PC-9 (cell line): ENCODE measurements at regions of chr11 and their contacts with region 1.

Region 1: DNA sequence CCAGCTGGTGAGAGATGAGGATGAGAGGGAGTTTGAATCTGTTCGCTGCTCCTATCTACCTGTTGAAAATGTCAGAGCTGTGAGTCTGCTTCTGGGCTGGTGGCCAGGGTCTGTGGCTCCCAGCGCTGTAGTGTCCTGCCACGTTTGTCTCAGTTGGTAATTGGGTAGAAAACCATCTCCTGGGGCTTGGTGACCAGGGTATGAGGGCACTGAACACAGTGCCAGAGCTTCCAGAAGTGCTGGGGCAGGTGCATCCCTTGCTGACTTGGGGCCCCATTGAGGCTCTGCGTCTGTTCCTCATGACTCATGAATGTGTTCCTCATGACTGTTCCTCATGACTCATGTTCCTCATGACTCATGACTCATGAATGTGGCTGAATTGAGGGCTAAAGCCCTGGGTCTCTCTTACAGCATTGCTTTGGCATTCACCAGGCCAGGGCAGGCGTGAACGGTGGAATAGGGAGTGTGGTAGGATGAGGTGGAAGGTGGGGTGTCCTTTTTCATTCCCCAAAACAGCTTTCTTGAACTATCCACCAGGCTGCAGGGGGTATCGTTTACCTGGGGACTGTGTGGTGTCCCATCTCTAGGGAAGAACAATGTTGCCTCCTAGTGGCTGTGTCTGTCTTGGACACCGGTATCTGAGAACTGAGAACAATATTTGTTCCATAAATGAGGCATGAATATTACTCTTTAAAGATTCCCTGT is 139.5 kb downstream of the COMMD9 start:
- DNase-seq: peak; percentile 94 to 100
- H3K4me3 ChIP-seq: no peak overlapping the region; the same call in 1 of the 2 replicates
- H3K27ac ChIP-seq: peak overlapping the region; percentile 89
- H3K4me1 ChIP-seq: peaks cover 30% of the 10 kb centered on the region
- H3K27me3 ChIP-seq: no peaks in the 10 kb centered on the region
- CTCF ChIP-seq: peak; percentile 88

Region 2: DNA sequence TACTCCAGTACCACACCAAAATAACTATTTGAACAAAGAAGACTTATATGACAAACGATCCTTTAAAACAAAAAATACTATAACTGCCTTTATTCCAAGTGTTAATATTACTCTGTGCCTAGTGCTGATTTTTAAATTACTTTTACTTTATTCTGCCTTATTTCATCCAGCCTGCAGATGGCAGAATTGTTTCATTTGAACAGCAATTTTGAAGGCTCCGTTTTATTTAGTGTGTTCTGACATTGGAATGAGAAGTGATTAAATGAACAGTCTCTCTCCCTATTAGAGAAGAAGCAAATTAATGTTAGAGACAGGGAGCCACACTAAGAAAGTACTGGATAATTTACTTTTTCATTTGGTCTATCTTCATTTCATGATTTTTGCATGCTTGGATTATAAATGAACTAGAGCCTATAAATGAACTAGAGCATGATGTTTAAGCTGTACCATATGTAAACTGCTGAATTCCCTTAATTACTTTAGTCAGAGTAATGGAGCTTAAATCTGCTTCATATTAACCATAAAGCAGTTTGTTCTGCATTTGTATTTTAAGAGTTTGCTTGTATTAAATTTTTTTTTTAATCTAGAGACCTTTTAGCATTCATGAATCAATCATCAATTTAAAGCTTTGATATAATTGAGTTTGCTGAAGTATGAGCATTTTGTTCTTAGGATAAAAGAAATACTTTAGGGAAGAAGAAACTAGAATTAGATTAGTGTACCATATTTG is 1223.4 kb before region 1 on chr11:
- CTCF ChIA-PET with region 1: no interaction called
- POLR2A ChIA-PET with region 1: no interaction called
- intact Hi-C with region 1: loop called (anchors 1 kb)
- DNase-seq: peak; percentile 8 to 50
- H3K4me3 ChIP-seq: no peak overlapping the region
- H3K27ac ChIP-seq: no peak overlapping the region
- H3K4me1 ChIP-seq: peaks cover 13% of the 10 kb centered on the region
- H3K27me3 ChIP-seq: no peaks in the 10 kb centered on the region
- CTCF ChIP-seq: peak; percentile 94

Region 3: DNA sequence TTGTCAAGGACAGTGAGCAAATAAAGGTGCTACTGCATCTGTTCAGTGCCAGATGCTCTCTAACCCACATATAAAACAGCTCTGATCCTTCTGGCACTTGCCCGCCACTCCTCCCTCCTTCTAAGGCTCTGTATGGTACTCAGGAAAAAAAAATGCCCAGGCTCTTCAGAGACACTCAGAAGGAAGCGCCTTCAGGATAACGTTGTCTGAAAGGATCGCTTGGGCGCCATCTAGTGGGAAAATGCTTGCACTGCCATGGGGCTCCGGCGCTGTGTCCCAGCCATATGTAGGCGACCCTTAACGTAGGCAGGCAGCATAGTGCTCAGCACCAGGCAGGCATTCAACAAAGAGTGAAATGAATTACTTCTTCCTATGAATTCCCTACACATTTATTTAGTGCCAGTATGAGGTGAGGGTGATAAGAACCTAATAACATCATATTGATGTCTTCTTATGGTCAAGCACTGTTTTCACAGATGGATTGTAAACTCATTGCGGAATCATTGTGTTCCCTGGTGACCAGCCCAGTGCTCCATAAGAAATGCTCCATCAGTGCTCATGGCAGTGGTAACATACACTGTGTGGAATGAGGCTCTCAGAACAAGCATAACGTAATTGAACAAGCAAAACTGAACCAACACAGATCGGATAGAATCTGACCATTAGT is 663.9 kb before region 1 on chr11:
- CTCF ChIA-PET with region 1: no interaction called
- POLR2A ChIA-PET with region 1: no interaction called
- intact Hi-C with region 1: loop called (anchors 1 kb)
- DNase-seq: peak; percentile 68 to 83
- H3K4me3 ChIP-seq: no peak overlapping the region
- H3K27ac ChIP-seq: no peak overlapping the region
- H3K4me1 ChIP-seq: no peaks in the 10 kb centered on the region
- H3K27me3 ChIP-seq: no peaks in the 10 kb centered on the region
- CTCF ChIP-seq: peak; percentile 96

Region 4: DNA sequence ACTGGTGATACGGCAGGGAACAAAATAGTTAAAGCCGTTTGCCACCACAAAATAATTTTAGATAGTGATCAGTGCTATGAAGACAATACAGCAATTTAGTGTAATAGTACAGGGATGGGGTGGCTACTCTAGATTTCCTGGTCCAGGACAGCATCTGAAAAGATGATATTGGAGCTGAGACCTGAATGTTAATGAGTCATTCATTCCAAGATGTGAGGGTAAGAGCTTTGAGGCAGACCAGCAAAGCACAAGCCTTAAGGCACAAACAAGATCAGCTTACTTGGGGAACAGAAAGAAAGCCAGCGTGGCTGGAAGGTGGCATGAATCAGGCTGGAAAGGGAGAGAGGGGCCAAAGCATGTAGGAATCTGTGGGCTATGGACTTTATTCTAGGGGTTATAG is 354.8 kb before region 1 on chr11:
- CTCF ChIA-PET with region 1: no interaction called
- POLR2A ChIA-PET with region 1: no interaction called
- intact Hi-C with region 1: loop called (anchors 10 kb)
- DNase-seq: peak; percentile 46 to 83
- H3K4me3 ChIP-seq: no peak overlapping the region
- H3K27ac ChIP-seq: peak overlapping the region; percentile 30
- H3K4me1 ChIP-seq: peaks cover 56% of the 10 kb centered on the region
- H3K27me3 ChIP-seq: no peaks in the 10 kb centered on the region
- CTCF ChIP-seq: no peak

Region 5: DNA sequence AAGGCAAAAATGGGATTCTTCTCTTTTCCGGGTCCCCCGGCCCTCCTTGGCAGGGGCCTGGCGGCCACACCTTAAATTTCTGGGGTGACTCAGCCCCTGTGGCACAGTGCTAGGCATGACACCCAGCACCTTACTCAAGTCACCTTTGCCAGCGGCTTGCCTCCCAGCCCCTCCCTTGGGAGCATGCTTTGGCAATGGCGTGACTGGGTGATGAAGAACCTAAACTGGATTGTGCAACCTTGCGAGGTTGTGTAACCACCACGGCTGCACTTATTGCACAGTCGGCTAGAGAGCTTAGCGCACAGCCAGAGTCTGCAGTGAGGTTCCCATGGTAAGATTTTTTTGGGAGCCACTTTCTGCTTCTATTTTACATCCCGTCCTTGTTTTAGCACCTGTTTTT is 222.0 kb before region 1 on chr11:
- CTCF ChIA-PET with region 1: no interaction called
- POLR2A ChIA-PET with region 1: no interaction called
- intact Hi-C with region 1: loop called (anchors 5 kb)
- DNase-seq: peak; percentile 95 to 99
- H3K4me3 ChIP-seq: peak overlapping the region; percentile 47; the same call in 1 of the 2 replicates
- H3K27ac ChIP-seq: peak overlapping the region; percentile 91
- H3K4me1 ChIP-seq: peaks cover 37% of the 10 kb centered on the region
- H3K27me3 ChIP-seq: no peaks in the 10 kb centered on the region
- CTCF ChIP-seq: no peak

Region 6: GRCh38 chr11:36265793-36266628 is 116.3 kb after region 1 on chr11:
- CTCF ChIA-PET with region 1: no interaction called
- POLR2A ChIA-PET with region 1: no interaction called
- intact Hi-C with region 1: loop called (anchors 1 kb)
- DNase-seq: peak; percentile 46 to 63
- H3K4me3 ChIP-seq: no peak overlapping the region
- H3K27ac ChIP-seq: no peak overlapping the region
- H3K4me1 ChIP-seq: no peaks in the 10 kb centered on the region
- H3K27me3 ChIP-seq: no peaks in the 10 kb centered on the region
- CTCF ChIP-seq: peak; percentile 97

Region 7: GRCh38 chr11:36478700-36479329 is 329.1 kb after region 1 on chr11:
- CTCF ChIA-PET with region 1: no interaction called
- POLR2A ChIA-PET with region 1: no interaction called
- intact Hi-C with region 1: loop called (anchors 5 kb)
- DNase-seq: peak; percentile 47 to 51
- H3K4me3 ChIP-seq: no peak overlapping the region
- H3K27ac ChIP-seq: no peak overlapping the region
- H3K4me1 ChIP-seq: 0 out of 2 replicates have a peak, but pooled peaks cover 3% of the 10 kb centered on the region
- H3K27me3 ChIP-seq: no peaks in the 10 kb centered on the region
- CTCF ChIP-seq: peak; percentile 88